ENCODE measurements at regions of chr12 and their contacts with region 1.

Region 1: GRCh38 chr12:79850610-79851299 is 84.1 kb downstream of the PPP1R12A start:
- DNase-seq: no peak
- H3K4me3 ChIP-seq: no peak overlapping the region
- H3K27ac ChIP-seq: no peak overlapping the region
- H3K4me1 ChIP-seq: no peaks in the 10 kb centered on the region
- H3K27me3 ChIP-seq: no peaks in the 10 kb centered on the region
- CTCF ChIP-seq: no peak

Region 2: DNA sequence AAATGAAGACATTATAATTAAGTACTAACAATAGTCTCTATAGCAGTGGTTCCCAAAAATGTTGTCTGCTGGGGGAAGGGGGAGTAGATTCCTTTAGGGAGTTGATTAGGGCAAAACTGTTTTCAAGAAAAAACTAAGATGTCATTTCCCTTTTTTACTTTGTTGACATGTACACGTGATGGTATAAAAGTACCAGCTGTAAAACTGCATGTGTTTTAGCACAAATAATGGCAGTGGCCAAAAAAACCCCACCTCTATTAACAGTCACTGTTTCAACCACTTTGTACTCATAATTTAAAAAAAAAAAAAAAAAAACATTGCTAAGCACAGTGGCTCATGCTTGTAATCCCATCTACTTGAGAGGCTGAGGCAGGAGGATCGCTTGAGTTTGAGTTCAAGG is 22.4 kb after region 1 on chr12:
- CTCF ChIA-PET with region 1: no interaction called
- POLR2A ChIA-PET with region 1: no interaction called
- intact Hi-C with region 1: no loop called
- DNase-seq: no peak
- H3K4me3 ChIP-seq: no peak overlapping the region
- H3K27ac ChIP-seq: no peak overlapping the region
- H3K4me1 ChIP-seq: no peaks in the 10 kb centered on the region
- H3K27me3 ChIP-seq: no peaks in the 10 kb centered on the region
- CTCF ChIP-seq: no peak

Region 3: GRCh38 chr12:80381121-80381520 is 530.4 kb after region 1 on chr12:
- CTCF ChIA-PET with region 1: no interaction called
- POLR2A ChIA-PET with region 1: no interaction called
- intact Hi-C with region 1: loop called (anchors 5 kb)
- DNase-seq: no peak
- H3K4me3 ChIP-seq: no peak overlapping the region
- H3K27ac ChIP-seq: no peak overlapping the region
- H3K4me1 ChIP-seq: no peaks in the 10 kb centered on the region
- H3K27me3 ChIP-seq: no peaks in the 10 kb centered on the region
- CTCF ChIP-seq: no peak